Endothelial cell of umbilical vein (primary cell): ENCODE measurements at regions of chr13 and their contacts with region 1.

Region 1: DNA sequence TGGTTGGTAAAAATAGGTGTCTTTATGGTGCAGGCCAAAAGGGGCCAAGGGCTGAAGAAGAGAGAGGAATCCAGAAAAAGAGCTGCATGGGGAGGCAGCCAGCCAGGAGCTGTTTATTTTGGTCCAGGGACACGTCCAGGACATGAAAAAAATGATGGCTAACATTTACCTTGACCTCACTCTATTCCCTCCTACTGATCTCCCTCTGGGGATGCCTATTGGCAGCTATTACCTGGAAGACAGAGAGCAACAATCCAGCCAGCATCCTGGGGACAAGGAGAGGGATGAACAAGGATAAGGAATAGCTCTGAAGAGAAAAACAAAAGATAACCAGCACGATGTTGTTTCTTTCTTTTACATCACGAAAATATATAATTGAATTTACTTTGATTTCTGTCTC is 1599.6 kb downstream of the SLITRK5 start:
- DNase-seq: no peak
- H3K4me3 ChIP-seq: no peak overlapping the region
- H3K27ac ChIP-seq: no peak overlapping the region
- H3K4me1 ChIP-seq: no peaks in the 10 kb centered on the region
- H3K27me3 ChIP-seq: no peaks in the 10 kb centered on the region
- CTCF ChIP-seq: no peak
- POLR2A ChIP-seq: no peak

Region 2: DNA sequence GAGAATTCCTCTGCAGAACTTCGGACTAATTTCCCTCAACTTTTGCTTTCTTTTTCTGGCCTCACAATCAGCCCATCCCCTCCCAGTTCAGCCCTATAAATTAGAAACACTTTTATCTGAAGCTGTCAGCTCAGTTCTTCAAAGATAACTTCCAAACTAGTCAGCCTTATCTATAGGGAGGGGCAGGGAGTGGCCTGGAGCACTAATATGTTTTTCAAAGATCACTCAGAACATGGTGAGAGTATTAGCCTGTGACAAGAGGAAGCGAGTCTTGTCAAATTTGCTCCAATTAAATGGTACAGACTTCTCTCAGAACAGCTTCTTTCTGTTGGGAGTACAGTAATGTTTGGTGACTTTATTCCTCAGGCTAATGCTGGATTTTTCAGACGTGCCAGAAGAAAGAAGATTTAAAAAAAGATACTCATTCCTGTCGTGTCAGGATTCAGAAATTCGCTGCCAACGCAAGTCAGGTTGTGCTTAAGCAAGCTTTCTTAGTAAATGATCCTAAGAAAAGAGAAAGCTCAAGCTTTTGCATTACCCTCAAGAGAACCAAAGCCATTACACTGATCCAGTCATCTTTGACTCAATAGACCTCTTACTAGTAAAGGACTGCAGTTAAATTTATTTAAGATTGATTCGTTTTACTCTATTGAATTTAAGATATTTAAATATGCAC is 566.0 kb before region 1 on chr13:
- CTCF ChIA-PET with region 1: no interaction called
- POLR2A ChIA-PET with region 1: no interaction called
- dilution Hi-C with region 1: no loop called
- intact Hi-C with region 1: loop called (anchors 5 kb)
- DNase-seq: no peak
- H3K4me3 ChIP-seq: no peak overlapping the region
- H3K27ac ChIP-seq: no peak overlapping the region
- H3K4me1 ChIP-seq: no peaks in the 10 kb centered on the region
- H3K27me3 ChIP-seq: no peaks in the 10 kb centered on the region
- CTCF ChIP-seq: no peak
- POLR2A ChIP-seq: no peak